Tibial artery (tissue), 4 donors: ENCODE measurements at regions of chr10 and their contacts with region 1.

Region 1: DNA sequence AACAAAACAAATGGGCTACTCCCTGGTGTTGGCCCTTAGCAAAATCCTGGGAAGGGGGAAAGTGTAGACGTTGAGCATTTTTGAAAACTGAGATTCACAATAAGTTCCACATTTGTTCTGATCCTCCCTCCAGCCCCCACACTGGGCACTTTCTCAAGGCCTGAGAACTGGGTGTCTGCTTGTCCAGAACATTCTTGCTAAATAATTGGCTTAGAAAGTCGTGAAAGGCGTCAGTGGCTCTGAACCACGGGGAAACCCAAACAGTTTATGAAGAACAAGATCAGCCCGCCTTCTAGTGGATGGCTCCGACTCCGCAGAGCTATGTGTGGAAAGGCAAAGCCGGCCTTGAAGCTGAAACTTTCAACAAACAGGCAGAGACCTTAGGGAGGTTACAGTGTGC is 370.1 kb downstream of the PRPF18 start:
- DNase-seq: peak; percentile 93 to 96
- H3K4me3 ChIP-seq: no peak overlapping the region
- H3K27ac ChIP-seq: peak overlapping the region; percentile 81 to 86
- H3K4me1 ChIP-seq: peaks cover 0 to 56% (median 23%) of the 10 kb centered on the region in 4 donors
- H3K27me3 ChIP-seq: no peaks in the 10 kb centered on the region
- CTCF ChIP-seq: peak; percentile 70 to 76

Region 2: DNA sequence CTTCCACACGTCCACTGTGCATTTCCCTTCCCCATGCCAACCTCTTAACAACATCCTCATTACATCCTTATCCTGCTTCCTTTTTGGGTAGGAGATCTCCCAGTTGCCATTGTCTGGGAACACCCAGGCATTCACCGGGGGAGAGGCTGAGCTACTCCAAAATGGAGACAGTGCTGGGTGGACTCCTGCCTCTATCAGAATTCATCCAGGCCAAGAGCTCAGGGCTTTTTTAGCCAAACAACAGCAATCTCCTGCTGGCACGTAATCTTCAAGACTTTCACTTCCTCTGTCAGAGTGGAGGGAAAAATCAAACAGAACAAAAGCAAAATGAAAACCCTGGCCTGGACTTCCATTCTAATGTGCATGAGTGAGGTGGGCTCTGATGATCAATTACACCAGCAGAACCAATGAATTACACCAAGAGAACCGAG is 125.1 kb before region 1 on chr10:
- intact Hi-C with region 1: loop called (anchors 10 kb)
- DNase-seq: no peak
- H3K4me3 ChIP-seq: peak overlapping the region in 1 of 2 donors; percentile 10
- H3K27ac ChIP-seq: peak overlapping the region; percentile 55 to 65
- H3K4me1 ChIP-seq: peaks cover 0 to 79% (median 32%) of the 10 kb centered on the region in 4 donors
- H3K27me3 ChIP-seq: no peaks in the 10 kb centered on the region
- CTCF ChIP-seq: no peak

Region 3: GRCh38 chr10:13891128-13892000 is 65.5 kb before region 1 on chr10:
- intact Hi-C with region 1: no loop called
- DNase-seq: peak in 1 of 2 donors; percentile 74
- H3K4me3 ChIP-seq: peak overlapping the region; percentile 63 to 84
- H3K27ac ChIP-seq: peak overlapping the region; percentile 91 to 95
- H3K4me1 ChIP-seq: peaks cover 0 to 50% (median 21%) of the 10 kb centered on the region in 4 donors
- H3K27me3 ChIP-seq: no peaks in the 10 kb centered on the region
- CTCF ChIP-seq: no peak